ENCODE measurements at regions of chr12 and their contacts with region 1.

Region 1: DNA sequence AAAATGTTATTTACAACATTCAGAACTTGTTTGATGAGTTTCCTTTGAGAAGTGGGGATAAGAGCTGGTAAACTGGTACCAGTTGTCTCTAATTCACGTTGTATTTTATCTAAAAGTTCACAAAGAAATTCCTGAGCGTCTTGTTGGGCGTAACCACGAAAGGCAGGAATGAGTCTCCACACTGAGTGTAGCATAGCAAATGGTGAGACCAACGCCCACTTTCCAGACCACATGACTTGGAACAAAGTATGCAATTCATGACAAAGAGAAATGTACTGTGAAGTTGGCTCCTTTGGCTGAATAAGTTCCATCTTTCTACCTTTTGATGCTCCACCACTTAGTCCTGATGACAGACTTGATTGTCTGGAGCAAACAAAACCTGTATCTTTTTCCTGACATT is 18.4 kb downstream of the USP44 start:
- DNase-seq: no peak
- ATAC-seq: no peak
- H3K4me3 ChIP-seq: no peak overlapping the region
- H3K27ac ChIP-seq: no peak overlapping the region
- H3K4me1 ChIP-seq: peaks cover 0 to 4% of the 10 kb centered on the region in 2 donors
- H3K27me3 ChIP-seq: no peaks in the 10 kb centered on the region

Region 2: GRCh38 chr12:95117178-95117599 is 415.7 kb before region 1 on chr12:
- intact Hi-C with region 1: loop called (anchors 2 to 10 kb)
- DNase-seq: peak in 1 of 2 donors; percentile 63
- ATAC-seq: peak; percentile 84
- H3K4me3 ChIP-seq: no peak overlapping the region
- H3K27ac ChIP-seq: peak overlapping the region in 1 of 2 donors; percentile 10
- H3K4me1 ChIP-seq: peaks cover 4 to 6% of the 10 kb centered on the region in 2 donors
- H3K27me3 ChIP-seq: no peaks in the 10 kb centered on the region

Region 3: GRCh38 chr12:95343461-95344230 is 189.2 kb before region 1 on chr12:
- intact Hi-C with region 1: loop called (anchors 5 to 10 kb)
- DNase-seq: no peak
- ATAC-seq: no peak
- H3K4me3 ChIP-seq: no peak overlapping the region
- H3K27ac ChIP-seq: no peak overlapping the region
- H3K4me1 ChIP-seq: peaks cover 0 to 2% of the 10 kb centered on the region in 2 donors
- H3K27me3 ChIP-seq: no peaks in the 10 kb centered on the region

Region 4: GRCh38 chr12:95402096-95402495 is 130.8 kb before region 1 on chr12:
- intact Hi-C with region 1: no loop called
- DNase-seq: no peak
- ATAC-seq: no peak
- H3K4me3 ChIP-seq: no peak overlapping the region
- H3K27ac ChIP-seq: no peak overlapping the region
- H3K4me1 ChIP-seq: no peaks in the 10 kb centered on the region
- H3K27me3 ChIP-seq: no peaks in the 10 kb centered on the region

Measured in aorta (tissue), 5 donors.